Panc1 (cell line): ENCODE measurements at regions of chr10 and their contacts with region 1.

Region 1: DNA sequence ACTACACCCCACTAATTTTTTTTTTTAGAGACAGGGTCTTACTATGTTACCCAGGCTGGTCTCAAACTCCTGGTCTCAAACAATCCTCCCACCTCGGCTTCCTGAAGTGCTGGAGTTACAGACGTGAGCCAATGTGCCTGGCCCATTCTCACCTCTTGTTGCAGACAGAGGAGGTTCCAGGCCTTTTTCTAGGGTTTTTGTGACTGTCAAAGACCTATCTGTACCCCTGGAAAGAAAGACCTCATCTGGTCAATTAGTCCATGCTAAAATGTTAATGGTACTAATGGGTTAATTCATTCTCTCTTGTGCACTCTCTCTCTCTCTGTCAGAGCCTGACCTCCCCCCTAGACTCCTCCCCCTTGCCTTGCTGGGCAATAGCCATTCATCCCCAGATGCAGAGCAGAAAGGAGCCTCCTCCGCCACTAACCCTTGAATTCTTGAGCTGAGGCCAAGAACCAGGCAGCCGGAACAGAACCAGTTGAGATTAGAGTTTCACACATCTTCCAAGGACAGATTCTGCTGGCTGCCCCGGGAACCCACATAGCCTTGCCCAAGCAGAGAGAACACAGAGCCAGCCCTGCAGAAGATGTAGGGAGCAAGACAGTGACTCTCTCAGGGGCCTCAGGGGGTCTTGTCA is 209.7 kb downstream of the SKIDA1 start:
- DNase-seq: no peak
- ATAC-seq: peak; percentile 92
- H3K4me3 ChIP-seq: no peak overlapping the region; a peak in 1 of 4 replicates
- H3K27ac ChIP-seq: peak overlapping the region; percentile 99
- H3K4me1 ChIP-seq: peaks cover 43% of the 10 kb centered on the region
- H3K27me3 ChIP-seq: no peaks in the 10 kb centered on the region
- CTCF ChIP-seq: no peak

Region 2: DNA sequence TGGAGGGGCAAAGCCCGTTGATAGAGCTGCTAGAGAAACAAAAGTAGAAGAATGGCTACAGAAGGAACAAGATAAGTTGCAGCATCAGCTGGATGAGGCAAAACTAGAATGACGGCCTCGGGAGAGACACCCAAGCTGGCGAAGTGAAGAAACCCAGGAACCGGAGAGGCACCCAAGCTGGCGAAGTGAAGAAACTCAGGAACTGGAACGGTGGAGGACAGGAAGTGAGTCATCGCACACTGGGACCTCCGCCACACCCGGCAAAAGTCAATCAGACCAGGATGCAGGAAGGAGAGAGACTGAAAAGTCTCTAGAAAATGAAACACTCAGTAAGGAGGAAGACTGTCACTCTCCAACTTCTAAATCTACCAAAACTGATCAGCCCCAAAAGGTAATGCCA is 285.7 kb before region 1 on chr10:
- CTCF ChIA-PET with region 1: interaction called, 10 read pairs
- POLR2A ChIA-PET with region 1: no interaction called
- in situ Hi-C with region 1: no loop called
- intact Hi-C with region 1: no loop called
- DNase-seq: no peak
- ATAC-seq: no peak
- H3K4me3 ChIP-seq: no peak overlapping the region
- H3K27ac ChIP-seq: no peak overlapping the region
- H3K4me1 ChIP-seq: no peaks in the 10 kb centered on the region
- H3K27me3 ChIP-seq: no peaks in the 10 kb centered on the region
- CTCF ChIP-seq: no peak

Region 3: DNA sequence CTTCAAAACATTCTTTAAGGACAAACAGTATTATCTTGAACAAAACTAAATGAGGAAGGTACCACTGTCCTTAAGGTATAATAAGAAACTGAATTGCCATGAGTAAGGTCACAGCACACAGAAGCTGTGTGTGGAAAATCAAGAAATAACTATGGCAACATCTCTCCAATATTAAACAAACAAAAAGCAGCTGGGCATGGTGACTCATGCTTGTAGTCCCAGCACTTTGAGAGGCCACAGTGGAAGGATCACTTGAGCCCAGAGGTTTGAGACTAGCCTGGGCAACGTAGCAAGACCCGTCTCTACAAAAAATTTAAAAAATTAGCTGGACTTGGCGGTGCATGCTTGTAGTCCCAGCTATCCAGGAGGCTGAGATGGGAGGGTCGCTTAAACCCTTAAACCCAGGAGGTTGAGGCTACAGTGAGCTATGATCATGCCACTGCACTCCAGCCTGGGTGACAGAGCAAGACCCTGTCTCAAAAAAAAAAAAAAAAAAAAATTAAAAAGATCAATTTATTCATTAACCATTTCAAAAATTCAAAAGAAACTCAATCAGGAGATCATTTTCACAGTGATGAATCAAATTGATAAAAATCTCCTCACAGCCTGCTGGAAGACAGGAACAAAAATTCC is 14.3 kb after region 1 on chr10:
- CTCF ChIA-PET with region 1: no interaction called
- POLR2A ChIA-PET with region 1: interaction called, 12 read pairs
- in situ Hi-C with region 1: no loop called
- intact Hi-C with region 1: no loop called
- DNase-seq: no peak
- ATAC-seq: peak; percentile 83
- H3K4me3 ChIP-seq: no peak overlapping the region
- H3K27ac ChIP-seq: peak overlapping the region; percentile 79
- H3K4me1 ChIP-seq: peaks cover 30% of the 10 kb centered on the region
- H3K27me3 ChIP-seq: no peaks in the 10 kb centered on the region
- CTCF ChIP-seq: no peak

Region 4: GRCh38 chr10:21352886-21353285 is 37.1 kb after region 1 on chr10:
- CTCF ChIA-PET with region 1: interaction called, 16 read pairs
- POLR2A ChIA-PET with region 1: no interaction called
- in situ Hi-C with region 1: no loop called
- intact Hi-C with region 1: no loop called
- DNase-seq: no peak
- ATAC-seq: no peak
- H3K4me3 ChIP-seq: no peak overlapping the region
- H3K27ac ChIP-seq: peak overlapping the region; percentile 94
- H3K4me1 ChIP-seq: peaks cover 24% of the 10 kb centered on the region
- H3K27me3 ChIP-seq: no peaks in the 10 kb centered on the region
- CTCF ChIP-seq: no peak

Region 5: GRCh38 chr10:21754410-21755011 is 438.7 kb after region 1 on chr10:
- CTCF ChIA-PET with region 1: no interaction called
- POLR2A ChIA-PET with region 1: no interaction called
- in situ Hi-C with region 1: no loop called
- intact Hi-C with region 1: no loop called
- DNase-seq: no peak
- ATAC-seq: no peak
- H3K4me3 ChIP-seq: no peak overlapping the region
- H3K27ac ChIP-seq: no peak overlapping the region
- H3K4me1 ChIP-seq: 0 out of 2 replicates have a peak, but pooled peaks cover 3% of the 10 kb centered on the region
- H3K27me3 ChIP-seq: no peaks in the 10 kb centered on the region
- CTCF ChIP-seq: no peak

Region 6: GRCh38 chr10:22780474-22780885 is 1464.7 kb after region 1 on chr10:
- CTCF ChIA-PET with region 1: no interaction called
- POLR2A ChIA-PET with region 1: no interaction called
- in situ Hi-C with region 1: no loop called
- intact Hi-C with region 1: no loop called
- DNase-seq: no peak
- ATAC-seq: no peak
- H3K4me3 ChIP-seq: no peak overlapping the region
- H3K27ac ChIP-seq: no peak overlapping the region
- H3K4me1 ChIP-seq: no peaks in the 10 kb centered on the region
- H3K27me3 ChIP-seq: no peaks in the 10 kb centered on the region
- CTCF ChIP-seq: no peak